PC-3 (cell line): ENCODE measurements at regions of chr3 and their contacts with region 1.

Region 1: GRCh38 chr3:159763602-159764489 is 224.8 kb upstream of the IL12A start:
- DNase-seq: peak; percentile 91
- ATAC-seq: peak; percentile 43
- H3K4me3 ChIP-seq: peak overlapping the region; percentile 76
- H3K27ac ChIP-seq: peak overlapping the region; percentile 90
- H3K4me1 ChIP-seq: peaks cover 43% of the 10 kb centered on the region
- H3K27me3 ChIP-seq: no peaks in the 10 kb centered on the region
- CTCF ChIP-seq: no peak

Region 2: GRCh38 chr3:159169828-159170227 is 594.0 kb before region 1 on chr3:
- CTCF ChIA-PET with region 1: no interaction called
- POLR2A ChIA-PET with region 1: interaction called, 5 read pairs
- intact Hi-C with region 1: loop called (anchors 10 kb)
- DNase-seq: peak; percentile 89
- ATAC-seq: peak; percentile 95
- H3K4me3 ChIP-seq: peak overlapping the region; percentile 3; the same call in 1 of the 2 replicates
- H3K27ac ChIP-seq: peak overlapping the region; percentile 76
- H3K4me1 ChIP-seq: peaks cover 59% of the 10 kb centered on the region
- H3K27me3 ChIP-seq: no peaks in the 10 kb centered on the region
- CTCF ChIP-seq: no peak

Region 3: GRCh38 chr3:159293493-159293892 is 470.4 kb before region 1 on chr3:
- CTCF ChIA-PET with region 1: no interaction called
- POLR2A ChIA-PET with region 1: no interaction called
- intact Hi-C with region 1: no loop called
- DNase-seq: no peak
- ATAC-seq: no peak
- H3K4me3 ChIP-seq: no peak overlapping the region
- H3K27ac ChIP-seq: no peak overlapping the region
- H3K4me1 ChIP-seq: no peaks in the 10 kb centered on the region
- H3K27me3 ChIP-seq: peaks cover 29% of the 10 kb centered on the region
- CTCF ChIP-seq: no peak

Region 4: DNA sequence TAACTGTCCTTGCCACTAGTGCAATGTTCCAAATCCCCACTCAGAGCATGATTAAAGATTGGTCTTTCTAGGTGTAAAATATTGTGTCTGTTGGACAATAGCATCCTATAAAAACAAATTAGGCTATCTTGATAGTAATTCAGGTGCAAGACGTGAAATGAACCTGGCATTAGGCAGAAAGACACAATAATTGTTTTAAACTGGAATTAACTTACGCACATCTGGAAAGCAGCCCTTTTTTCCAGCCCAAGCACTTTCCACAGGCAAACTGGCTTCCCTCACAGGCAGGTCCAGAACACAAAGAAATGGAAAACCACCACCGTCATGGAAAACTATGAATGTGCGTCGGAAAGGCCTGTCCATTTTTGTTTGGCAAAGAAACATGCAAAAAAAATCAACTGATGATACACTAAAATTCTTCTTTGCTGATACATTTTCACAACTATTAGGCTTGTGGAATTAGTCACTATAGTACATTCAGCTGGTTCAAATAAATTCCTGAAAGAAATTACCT is 249.9 kb before region 1 on chr3:
- CTCF ChIA-PET with region 1: no interaction called
- POLR2A ChIA-PET with region 1: no interaction called
- intact Hi-C with region 1: no loop called
- DNase-seq: no peak
- ATAC-seq: no peak
- H3K4me3 ChIP-seq: no peak overlapping the region
- H3K27ac ChIP-seq: no peak overlapping the region
- H3K4me1 ChIP-seq: no peaks in the 10 kb centered on the region
- H3K27me3 ChIP-seq: peaks cover 6% of the 10 kb centered on the region; the same call in 1 of the 2 replicates
- CTCF ChIP-seq: no peak

Region 5: GRCh38 chr3:159616212-159616825 is 147.5 kb before region 1 on chr3:
- CTCF ChIA-PET with region 1: interaction called, 3 read pairs
- POLR2A ChIA-PET with region 1: no interaction called
- intact Hi-C with region 1: loop called (anchors 1 kb)
- DNase-seq: peak; percentile 78
- ATAC-seq: peak; percentile 57
- H3K4me3 ChIP-seq: no peak overlapping the region
- H3K27ac ChIP-seq: no peak overlapping the region
- H3K4me1 ChIP-seq: peaks cover 26% of the 10 kb centered on the region
- H3K27me3 ChIP-seq: no peaks in the 10 kb centered on the region
- CTCF ChIP-seq: peak; percentile 70

Region 6: GRCh38 chr3:159732172-159733111 is 31.4 kb before region 1 on chr3:
- CTCF ChIA-PET with region 1: interaction called, 4 read pairs
- POLR2A ChIA-PET with region 1: no interaction called
- intact Hi-C with region 1: loop called (anchors 1 kb)
- DNase-seq: peak; percentile 80
- ATAC-seq: peak; percentile 81
- H3K4me3 ChIP-seq: peak overlapping the region; percentile 57
- H3K27ac ChIP-seq: peak overlapping the region; percentile 10; the same call in 1 of the 2 replicates
- H3K4me1 ChIP-seq: peaks cover 25% of the 10 kb centered on the region
- H3K27me3 ChIP-seq: no peaks in the 10 kb centered on the region
- CTCF ChIP-seq: no peak

Region 7: DNA sequence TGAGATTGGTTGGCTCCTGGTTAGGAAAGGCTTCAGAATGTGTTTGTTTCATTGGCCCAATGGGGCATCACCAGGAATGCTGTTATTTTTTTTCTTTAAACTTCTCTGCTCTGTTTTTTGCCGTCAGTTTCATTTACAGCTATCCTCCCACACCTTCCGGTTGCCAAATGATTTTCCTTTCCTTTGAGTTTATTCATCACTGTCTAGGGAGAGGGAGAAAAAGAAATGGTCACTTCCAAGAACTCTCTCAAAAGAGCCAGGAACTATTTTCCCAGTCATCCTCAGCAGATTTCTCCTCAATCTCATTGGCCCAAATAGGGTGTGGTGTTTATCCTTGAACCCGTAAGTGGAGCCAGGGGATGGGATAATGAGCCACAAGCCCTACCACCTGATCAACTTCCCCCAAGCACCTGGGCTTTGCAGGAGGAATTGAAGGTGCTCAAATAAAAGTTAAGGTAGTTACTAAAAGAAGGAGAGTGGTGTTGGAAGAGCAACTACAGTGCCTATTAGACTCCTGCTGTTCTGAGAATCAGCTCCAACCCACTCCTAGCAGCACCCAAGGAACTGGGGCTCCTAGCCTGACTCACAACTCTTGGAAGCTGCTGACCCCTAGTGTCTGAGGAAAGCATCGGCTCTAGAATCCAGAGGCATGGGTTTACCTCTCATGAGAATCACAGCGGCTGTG is 41.0 kb after region 1 on chr3:
- CTCF ChIA-PET with region 1: interaction called, 9 read pairs
- POLR2A ChIA-PET with region 1: interaction called, 22 read pairs
- intact Hi-C with region 1: loop called (anchors 1 kb)
- DNase-seq: peak; percentile 93
- ATAC-seq: peak; percentile 98
- H3K4me3 ChIP-seq: no peak overlapping the region
- H3K27ac ChIP-seq: no peak overlapping the region
- H3K4me1 ChIP-seq: peaks cover 22% of the 10 kb centered on the region
- H3K27me3 ChIP-seq: no peaks in the 10 kb centered on the region
- CTCF ChIP-seq: peak; percentile 97

Region 8: DNA sequence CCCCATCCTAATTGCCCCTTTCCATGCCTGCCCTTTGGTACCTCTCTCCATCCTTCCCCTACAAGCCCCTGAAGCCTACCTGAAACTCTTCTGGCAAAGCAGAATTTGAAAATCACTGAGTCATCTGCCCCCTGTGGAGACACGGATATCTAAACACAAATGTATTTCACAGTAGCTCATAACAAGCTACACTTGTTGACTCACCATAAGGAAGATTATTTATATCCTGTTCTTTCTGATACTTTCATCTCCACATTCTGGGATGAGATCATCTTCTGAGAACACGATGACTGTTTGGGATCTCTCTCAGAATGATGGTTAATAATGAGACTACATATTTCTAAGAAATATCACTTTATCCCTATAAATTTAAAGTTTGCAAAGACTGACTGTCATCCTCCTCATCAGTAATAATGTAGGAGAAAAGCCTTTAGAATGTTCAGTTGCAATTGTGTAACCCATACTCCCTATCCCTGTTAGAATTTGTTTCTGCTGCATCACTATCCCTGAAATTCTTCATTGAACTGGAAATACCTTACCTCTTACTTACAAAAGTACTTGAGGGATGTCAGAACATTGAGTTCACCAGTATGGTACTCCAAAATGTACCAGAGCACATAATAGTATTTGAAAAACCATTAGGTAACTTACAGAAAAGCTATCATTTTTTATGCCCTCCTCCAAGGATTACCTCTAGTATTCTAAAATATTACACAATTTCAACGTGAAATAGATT is 108.7 kb after region 1 on chr3:
- CTCF ChIA-PET with region 1: no interaction called
- POLR2A ChIA-PET with region 1: no interaction called
- intact Hi-C with region 1: loop called (anchors 5 kb)
- DNase-seq: peak; percentile 92
- ATAC-seq: peak; percentile 95
- H3K4me3 ChIP-seq: no peak overlapping the region
- H3K27ac ChIP-seq: peak overlapping the region; percentile 61
- H3K4me1 ChIP-seq: peaks cover 30% of the 10 kb centered on the region
- H3K27me3 ChIP-seq: no peaks in the 10 kb centered on the region
- CTCF ChIP-seq: peak; percentile 50

Region 9: GRCh38 chr3:160003520-160004128 is 239.8 kb after region 1 on chr3:
- CTCF ChIA-PET with region 1: no interaction called
- POLR2A ChIA-PET with region 1: no interaction called
- intact Hi-C with region 1: loop called (anchors 5 kb)
- DNase-seq: peak; percentile 78
- ATAC-seq: peak; percentile 82
- H3K4me3 ChIP-seq: no peak overlapping the region
- H3K27ac ChIP-seq: no peak overlapping the region
- H3K4me1 ChIP-seq: no peaks in the 10 kb centered on the region
- H3K27me3 ChIP-seq: no peaks in the 10 kb centered on the region
- CTCF ChIP-seq: peak; percentile 87